ENCODE measurements at regions of chr1 and their contacts with region 1.

Region 1: DNA sequence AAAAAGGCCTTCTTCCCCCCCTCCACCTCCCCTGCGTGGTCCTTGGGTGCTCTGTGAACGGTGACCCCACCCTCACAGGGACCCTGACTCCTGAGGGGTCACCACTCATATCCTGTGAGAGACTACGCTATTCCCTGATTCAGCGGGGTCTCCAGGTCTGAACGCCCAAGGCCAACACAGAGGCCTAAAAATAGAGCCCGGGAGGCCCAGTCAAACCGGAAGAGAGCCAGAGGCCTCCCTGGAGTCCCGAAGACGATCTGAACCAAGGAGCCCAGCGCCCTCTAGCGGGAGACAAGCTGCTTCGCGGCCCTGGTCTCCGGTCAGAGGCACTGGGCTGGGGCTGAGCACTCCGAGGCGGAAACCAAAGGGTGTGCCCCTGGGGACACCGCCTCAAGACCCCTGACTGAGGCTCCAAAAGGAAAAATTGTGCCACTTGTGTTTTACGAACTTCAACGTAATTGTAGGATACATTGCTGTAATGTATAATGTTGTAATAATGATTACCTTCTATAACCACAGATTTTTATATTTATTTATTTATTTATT is 42.4 kb upstream of the PSEN2 start:
- DNase-seq: peak; percentile 94 to 98 (median 97)
- ATAC-seq: peak; percentile 96 to 98 (median 97)
- H3K4me3 ChIP-seq: peak overlapping the region in 8 of 12 donors; percentile 18 to 47 (median 33)
- H3K27ac ChIP-seq: peak overlapping the region; percentile 27 to 93 (median 85)
- H3K4me1 ChIP-seq: peaks cover 0 to 20% (median 14%) of the 10 kb centered on the region in 12 donors
- H3K27me3 ChIP-seq: no peaks in the 10 kb centered on the region
- CTCF ChIP-seq: peak; percentile 92 to 98 (median 96)
- POLR2A ChIP-seq: no peak

Region 2: GRCh38 chr1:226526801-226527595 is 301.0 kb before region 1 on chr1:
- intact Hi-C with region 1: no loop called
- DNase-seq: peak in 4 of 5 donors; percentile 36 to 63 (median 48)
- ATAC-seq: peak in 3 of 4 donors; percentile 51 to 78 (median 67)
- H3K4me3 ChIP-seq: peak overlapping the region in 5 of 12 donors; percentile 21 to 30 (median 27)
- H3K27ac ChIP-seq: peak overlapping the region in 5 of 12 donors; percentile 21 to 43 (median 32)
- H3K4me1 ChIP-seq: peaks cover 0 to 9% (median 2%) of the 10 kb centered on the region in 12 donors
- H3K27me3 ChIP-seq: no peaks in the 10 kb centered on the region
- CTCF ChIP-seq: no peak
- POLR2A ChIP-seq: no peak

Region 3: GRCh38 chr1:226626577-226626956 is 201.5 kb before region 1 on chr1:
- intact Hi-C with region 1: loop called in 2 of 10 experiments (anchors 2 to 5 kb)
- DNase-seq: peak; percentile 75 to 83 (median 76)
- ATAC-seq: peak; percentile 80 to 90 (median 88)
- H3K4me3 ChIP-seq: no peak overlapping the region
- H3K27ac ChIP-seq: peak overlapping the region in 1 of 12 donors; percentile 32
- H3K4me1 ChIP-seq: peaks cover 0 to 10% (median 6%) of the 10 kb centered on the region in 12 donors
- H3K27me3 ChIP-seq: no peaks in the 10 kb centered on the region
- CTCF ChIP-seq: peak; percentile 94 to 99 (median 97)
- POLR2A ChIP-seq: no peak

Region 4: GRCh38 chr1:226702957-226703831 is 124.8 kb before region 1 on chr1:
- intact Hi-C with region 1: loop called in 1 of 10 experiments (anchors 10 kb)
- DNase-seq: peak; percentile 85 to 88 (median 87)
- ATAC-seq: peak; percentile 68 to 94 (median 89)
- H3K4me3 ChIP-seq: peak overlapping the region; percentile 54 to 84 (median 69)
- H3K27ac ChIP-seq: peak overlapping the region in 11 of 12 donors; percentile 94 to 99 (median 97)
- H3K4me1 ChIP-seq: peaks cover 4 to 62% (median 41%) of the 10 kb centered on the region in 12 donors
- H3K27me3 ChIP-seq: no peaks in the 10 kb centered on the region
- CTCF ChIP-seq: peak in 1 of 12 donors; percentile 6
- POLR2A ChIP-seq: peak in 1 of 2 donors; percentile 78